CD14-positive monocyte (primary cell): ENCODE measurements at regions of chr17 and their contacts with region 1.

Region 1: GRCh38 chr17:79789534-79790353 is 7.1 kb downstream of the CBX8 start:
- DNase-seq: peak in 2 of 3 donors; percentile 49 to 59
- H3K4me3 ChIP-seq: no peak overlapping the region
- H3K4me3 Mint-ChIP-seq: peak overlapping the region in 1 of 2 donors; percentile 65
- H3K27ac ChIP-seq: no peak overlapping the region
- H3K27ac Mint-ChIP-seq: no peak overlapping the region
- H3K4me1 ChIP-seq: peaks cover 19 to 25% of the 10 kb centered on the region in 2 donors
- H3K4me1 Mint-ChIP-seq: peaks cover 18% of the 10 kb centered on the region
- H3K27me3 ChIP-seq: peaks cover 53 to 79% of the 10 kb centered on the region in 2 donors
- H3K27me3 Mint-ChIP-seq: peaks cover 65 to 84% (median 68%) of the 10 kb centered on the region in 3 donors
- CTCF ChIP-seq: peak; percentile 94

Region 2: DNA sequence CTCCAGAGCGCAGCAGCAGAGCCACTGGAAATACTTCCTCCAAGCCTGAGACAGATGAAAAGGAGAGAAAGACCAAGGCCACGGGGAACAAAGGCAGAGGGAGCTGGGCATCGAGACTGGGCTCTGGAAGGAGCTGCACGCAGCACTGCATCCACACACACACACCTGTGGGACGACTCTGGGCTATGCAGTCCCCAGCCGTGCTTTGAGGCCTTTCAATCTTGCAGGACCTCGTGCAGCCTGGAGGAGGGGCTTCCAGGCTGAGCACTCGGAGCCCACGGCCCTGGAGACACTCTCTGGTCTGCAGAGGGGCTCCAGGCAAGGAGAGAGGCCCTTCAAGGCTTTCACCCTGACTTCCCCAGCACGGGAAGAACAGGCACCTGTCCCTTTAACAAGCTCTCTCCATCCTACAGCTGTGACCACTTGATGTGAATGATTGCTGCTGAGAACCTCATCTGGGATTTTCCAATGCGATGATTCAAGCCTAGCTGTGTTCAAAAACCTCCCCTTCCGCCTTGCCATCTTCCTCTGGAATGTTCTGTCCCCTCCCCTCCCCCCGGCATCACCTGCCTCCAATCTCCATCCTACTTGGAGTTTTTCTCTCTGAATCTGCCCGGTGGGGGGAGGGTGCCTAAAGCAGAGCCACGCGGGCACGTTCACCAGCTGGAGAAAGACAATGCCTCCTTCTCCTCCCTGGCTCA is 216.4 kb before region 1 on chr17:
- intact Hi-C with region 1: no loop called
- DNase-seq: no peak
- H3K4me3 ChIP-seq: no peak overlapping the region
- H3K4me3 Mint-ChIP-seq: no peak overlapping the region
- H3K27ac ChIP-seq: no peak overlapping the region
- H3K27ac Mint-ChIP-seq: peak overlapping the region in 1 of 7 donors; percentile 26
- H3K4me1 ChIP-seq: no peaks in the 10 kb centered on the region
- H3K4me1 Mint-ChIP-seq: no peaks in the 10 kb centered on the region
- H3K27me3 ChIP-seq: no peaks in the 10 kb centered on the region
- H3K27me3 Mint-ChIP-seq: peaks cover 0 to 2% (median 2%) of the 10 kb centered on the region in 3 donors
- CTCF ChIP-seq: no peak

Region 3: DNA sequence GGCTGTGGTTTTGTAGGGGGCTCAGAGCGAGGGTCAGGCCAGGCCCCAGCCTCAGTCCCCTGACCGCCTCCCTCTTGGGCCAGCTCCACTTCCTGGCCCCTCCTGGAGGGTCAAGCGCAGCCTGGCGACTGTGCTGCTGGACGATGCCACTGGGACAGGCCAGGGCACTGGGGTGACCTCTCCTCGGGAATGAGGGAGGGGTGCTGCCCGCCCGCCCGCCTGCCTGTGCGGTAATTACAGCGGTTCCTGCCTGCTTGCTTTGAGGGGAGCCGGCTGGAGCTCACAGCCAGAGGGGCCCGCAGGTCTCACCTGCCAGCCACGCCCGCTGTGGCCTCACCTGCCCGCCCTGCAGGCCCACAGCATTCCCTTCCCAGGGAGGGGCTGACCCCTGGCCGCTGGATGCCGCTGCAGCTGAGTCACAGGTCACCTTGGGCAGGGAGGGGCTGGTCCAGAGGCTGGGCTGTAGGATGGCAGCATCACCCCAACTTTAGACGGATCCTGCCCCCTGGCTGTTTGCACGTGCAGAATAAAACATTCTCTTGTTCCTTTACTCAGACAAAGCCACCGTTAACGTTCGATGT is 126.2 kb after region 1 on chr17:
- intact Hi-C with region 1: loop called (anchors 5 kb)
- DNase-seq: peak in 2 of 3 donors; percentile 16 to 39
- H3K4me3 ChIP-seq: no peak overlapping the region
- H3K4me3 Mint-ChIP-seq: no peak overlapping the region
- H3K27ac ChIP-seq: no peak overlapping the region
- H3K27ac Mint-ChIP-seq: no peak overlapping the region
- H3K4me1 ChIP-seq: no peaks in the 10 kb centered on the region
- H3K4me1 Mint-ChIP-seq: no peaks in the 10 kb centered on the region
- H3K27me3 ChIP-seq: no peaks in the 10 kb centered on the region
- H3K27me3 Mint-ChIP-seq: peaks cover 6 to 16% (median 8%) of the 10 kb centered on the region in 3 donors
- CTCF ChIP-seq: peak; percentile 33

Region 4: GRCh38 chr17:79991140-79991923 is 201.6 kb after region 1 on chr17:
- intact Hi-C with region 1: loop called (anchors 5 kb)
- DNase-seq: peak; percentile 68 to 76 (median 71)
- H3K4me3 ChIP-seq: peak overlapping the region in 2 of 3 experiments; percentile 36 to 67
- H3K4me3 Mint-ChIP-seq: peak overlapping the region; percentile 64 to 83
- H3K27ac ChIP-seq: no peak overlapping the region
- H3K27ac Mint-ChIP-seq: no peak overlapping the region
- H3K4me1 ChIP-seq: peaks cover 31 to 45% of the 10 kb centered on the region in 2 donors
- H3K4me1 Mint-ChIP-seq: peaks cover 33% of the 10 kb centered on the region
- H3K27me3 ChIP-seq: peaks cover 0 to 7% of the 10 kb centered on the region in 2 donors
- H3K27me3 Mint-ChIP-seq: peaks cover 15 to 28% (median 17%) of the 10 kb centered on the region in 3 donors
- CTCF ChIP-seq: peak; percentile 70